ENCODE measurements at regions of chr10 and their contacts with region 1.

Region 1: DNA sequence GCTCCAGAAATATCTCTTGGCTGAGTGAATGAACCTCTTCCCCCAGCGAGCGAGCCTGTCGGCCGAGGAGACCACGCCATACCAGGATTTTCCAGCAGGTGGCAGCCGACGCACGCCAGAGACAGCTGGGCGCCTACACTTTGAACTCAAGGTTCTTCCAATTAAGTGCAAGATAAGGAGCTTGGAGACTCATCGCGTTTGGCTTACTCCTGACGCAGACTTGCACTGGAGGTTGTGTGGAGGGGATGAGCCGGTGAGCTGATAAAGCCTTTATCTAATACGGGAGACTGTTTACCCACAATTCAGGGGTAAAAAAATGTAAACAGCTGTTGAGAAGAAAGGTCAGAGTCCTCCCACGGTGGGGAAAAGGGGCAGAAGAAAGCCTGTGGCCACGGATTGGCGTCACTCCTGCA is 45.9 kb upstream of the EMX2 start:
- DNase-seq: peak; percentile 80 to 92 (median 85)
- H3K4me3 ChIP-seq: no peak overlapping the region
- H3K27ac ChIP-seq: no peak overlapping the region
- H3K4me1 ChIP-seq: no peaks in the 10 kb centered on the region
- H3K27me3 ChIP-seq: peaks cover 4% of the 10 kb centered on the region
- CTCF ChIP-seq: peak; percentile 89 to 97 (median 94)
- POLR2A ChIP-seq: no peak

Region 2: GRCh38 chr10:117284716-117285494 is 211.7 kb before region 1 on chr10:
- intact Hi-C with region 1: no loop called
- DNase-seq: no peak
- H3K4me3 ChIP-seq: no peak overlapping the region
- H3K27ac ChIP-seq: no peak overlapping the region
- H3K4me1 ChIP-seq: no peaks in the 10 kb centered on the region
- H3K27me3 ChIP-seq: no peaks in the 10 kb centered on the region
- CTCF ChIP-seq: no peak
- POLR2A ChIP-seq: no peak

Region 3: GRCh38 chr10:118241229-118242137 is 744.9 kb after region 1 on chr10:
- intact Hi-C with region 1: loop called (anchors 5 kb)
- DNase-seq: peak; percentile 63 to 94 (median 81)
- H3K4me3 ChIP-seq: no peak overlapping the region
- H3K27ac ChIP-seq: no peak overlapping the region
- H3K4me1 ChIP-seq: no peaks in the 10 kb centered on the region
- H3K27me3 ChIP-seq: peaks cover 63% of the 10 kb centered on the region
- CTCF ChIP-seq: peak; percentile 84 to 96 (median 92)
- POLR2A ChIP-seq: no peak

Region 4: GRCh38 chr10:118423800-118424479 is 927.3 kb after region 1 on chr10:
- intact Hi-C with region 1: loop called in 1 of 2 experiments (anchors 10 kb)
- DNase-seq: peak; percentile 66 to 89 (median 86)
- H3K4me3 ChIP-seq: no peak overlapping the region
- H3K27ac ChIP-seq: no peak overlapping the region
- H3K4me1 ChIP-seq: no peaks in the 10 kb centered on the region
- H3K27me3 ChIP-seq: peaks cover 7% of the 10 kb centered on the region
- CTCF ChIP-seq: peak; percentile 33 to 78 (median 68)
- POLR2A ChIP-seq: no peak

Region 5: DNA sequence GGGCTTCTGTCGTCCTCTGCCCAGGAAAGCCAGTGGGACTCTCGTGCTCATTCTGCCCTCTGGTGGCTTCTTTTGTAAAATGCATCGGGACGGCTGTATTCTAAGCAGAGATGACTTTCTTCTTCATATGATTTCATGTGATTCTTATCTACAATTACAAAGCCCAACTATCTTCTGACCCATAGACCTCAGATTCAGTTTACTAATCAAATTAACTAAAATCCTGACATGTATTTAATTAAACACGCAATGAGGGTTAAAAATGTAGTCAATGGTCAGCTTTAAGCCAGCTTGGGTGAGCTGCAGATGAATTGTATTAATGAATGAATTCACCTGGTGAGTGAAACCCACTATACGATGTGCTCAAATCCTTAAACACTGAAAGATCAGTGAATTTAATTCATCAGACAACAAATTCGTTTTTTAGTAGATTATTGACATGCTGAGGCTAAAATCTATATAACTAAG is 963.1 kb after region 1 on chr10:
- intact Hi-C with region 1: loop called in 1 of 2 experiments (anchors 10 kb)
- DNase-seq: peak; percentile 35 to 81 (median 68)
- H3K4me3 ChIP-seq: no peak overlapping the region
- H3K27ac ChIP-seq: no peak overlapping the region
- H3K4me1 ChIP-seq: peaks cover 0 to 4% of the 10 kb centered on the region in 2 donors
- H3K27me3 ChIP-seq: peaks cover 12% of the 10 kb centered on the region
- CTCF ChIP-seq: peak; percentile 40 to 73 (median 58)
- POLR2A ChIP-seq: no peak